HepG2 (cell line): ENCODE measurements at regions of chr12 and their contacts with region 1.

Region 1: GRCh38 chr12:123232807-123233543 is at the starts of genes MPHOSPH9 and MTRFR:
- DNase-seq: peak; percentile 100
- ATAC-seq: peak; percentile 95
- H3K4me3 ChIP-seq: peak within 1 kb of the TSS; percentile 81 to 96 (median 95)
- H3K27ac ChIP-seq: peak within 1 kb of the TSS; percentile 89
- H3K4me1 ChIP-seq: peaks cover 55% of the 10 kb centered on the region
- H3K27me3 ChIP-seq: no peaks in the 10 kb centered on the region; a peak in 1 of 5 replicates
- CTCF ChIP-seq: no peak
- EP300 ChIP-seq: peak in 1 of 2 experiments; percentile 21; a peak in 2 of 4 replicates
- POLR2A ChIP-seq: peak; percentile 99
- RAD21 ChIP-seq: peak; percentile 72
- total RNA-seq, gene MPHOSPH9: 63.4 and 105 TPM in 2 replicates
- total RNA-seq, gene MTRFR: 9.9 and 10.0 TPM in 2 replicates

Region 2: DNA sequence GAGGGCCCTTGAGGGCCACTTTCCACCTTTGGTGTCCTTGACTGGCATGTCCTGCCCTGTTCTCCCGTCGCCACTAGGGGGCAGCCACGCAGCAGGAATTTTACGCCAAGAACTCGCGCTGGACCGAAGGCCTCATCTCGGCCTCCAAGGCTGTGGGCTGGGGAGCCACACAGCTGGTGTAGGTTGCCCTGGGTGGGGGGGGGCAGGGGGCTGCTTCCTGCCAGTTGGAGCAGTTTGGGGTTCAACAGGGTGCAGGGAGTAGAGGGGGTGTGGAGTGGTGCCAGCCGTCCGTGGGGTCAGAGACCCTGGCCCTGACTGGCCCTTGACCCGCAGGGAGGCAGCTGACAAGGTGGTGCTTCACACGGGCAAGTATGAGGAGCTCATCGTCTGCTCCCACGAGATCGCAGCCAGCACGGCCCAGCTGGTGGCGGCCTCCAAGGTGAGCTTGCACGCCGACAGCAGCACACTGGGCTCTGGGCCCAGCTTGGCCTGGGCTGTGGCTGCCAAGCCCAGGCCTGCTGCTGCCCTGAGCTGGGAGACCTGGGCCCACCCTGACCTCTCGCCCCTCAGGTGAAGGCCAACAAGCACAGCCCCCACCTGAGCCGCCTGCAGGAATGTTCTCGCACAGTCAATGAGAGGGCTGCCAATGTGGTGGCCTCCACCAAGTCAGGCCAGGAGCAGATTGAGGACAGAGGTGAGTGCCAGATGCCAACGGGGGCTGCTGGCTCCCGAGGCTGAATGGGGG is 372.5 kb before region 1 on chr12:
- CTCF ChIA-PET with region 1: no interaction called
- POLR2A ChIA-PET with region 1: interaction called, 5 read pairs
- in situ Hi-C with region 1: loop called (anchors 25 kb)
- intact Hi-C with region 1: no loop called
- DNase-seq: peak; percentile 48
- ATAC-seq: peak; percentile 56
- H3K4me3 ChIP-seq: no peak overlapping the region
- H3K27ac ChIP-seq: peak overlapping the region; percentile 25
- H3K4me1 ChIP-seq: peaks cover 61% of the 10 kb centered on the region
- H3K27me3 ChIP-seq: no peaks in the 10 kb centered on the region
- CTCF ChIP-seq: peak; percentile 94
- EP300 ChIP-seq: no peak
- POLR2A ChIP-seq: no peak
- RAD21 ChIP-seq: peak; percentile 93

Region 3: DNA sequence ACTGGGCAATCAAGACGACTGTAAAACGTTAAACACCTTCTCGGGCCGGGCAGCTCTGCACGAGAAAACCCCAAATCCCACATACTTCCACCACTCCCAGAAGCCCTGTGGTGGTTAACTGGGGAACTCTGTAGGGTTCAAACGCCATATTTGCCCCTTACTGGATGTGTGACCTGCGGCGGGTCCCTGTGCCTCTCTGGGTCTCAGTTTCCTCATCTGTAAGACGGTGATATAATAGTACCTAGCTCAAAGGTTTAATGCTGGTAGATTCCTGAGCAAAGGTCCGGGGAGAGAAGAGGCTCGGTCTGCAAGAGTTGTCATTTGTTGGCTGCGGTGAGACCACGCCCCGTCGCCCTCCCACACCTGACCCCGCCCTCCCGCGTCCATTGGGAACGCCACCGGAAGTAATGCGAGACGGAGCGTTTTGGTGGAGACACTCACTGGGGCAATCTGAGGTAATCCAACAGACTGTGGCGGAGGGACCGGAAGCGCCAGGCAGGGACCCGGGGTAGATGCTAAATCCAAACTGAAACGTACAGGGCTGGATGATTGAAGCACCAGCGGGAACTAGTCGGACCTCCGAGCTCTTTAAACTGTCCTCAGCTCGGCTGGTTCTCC is 258.6 kb before region 1 on chr12:
- CTCF ChIA-PET with region 1: no interaction called
- POLR2A ChIA-PET with region 1: interaction called, 27 read pairs
- in situ Hi-C with region 1: no loop called
- intact Hi-C with region 1: loop called (anchors 5 kb)
- DNase-seq: peak; percentile 96
- ATAC-seq: peak; percentile 86
- H3K4me3 ChIP-seq: peak overlapping the region; percentile 83 to 95 (median 90)
- H3K27ac ChIP-seq: peak overlapping the region; percentile 92
- H3K4me1 ChIP-seq: peaks cover 38% of the 10 kb centered on the region
- H3K27me3 ChIP-seq: no peaks in the 10 kb centered on the region; a peak in 1 of 5 replicates
- CTCF ChIP-seq: no peak
- EP300 ChIP-seq: no peak; a peak in 1 of 4 replicates
- POLR2A ChIP-seq: peak in 1 of 2 experiments; percentile 43; a peak in 1 of 4 replicates
- RAD21 ChIP-seq: no peak

Region 4: GRCh38 chr12:123075646-123076171 is 157.3 kb before region 1 on chr12:
- CTCF ChIA-PET with region 1: no interaction called
- POLR2A ChIA-PET with region 1: interaction called, 11 read pairs
- in situ Hi-C with region 1: no loop called
- intact Hi-C with region 1: no loop called
- DNase-seq: peak; percentile 78
- ATAC-seq: peak; percentile 89
- H3K4me3 ChIP-seq: peak overlapping the region in 2 of 3 experiments; percentile 27 to 56; a peak in 3 of 6 replicates
- H3K27ac ChIP-seq: peak overlapping the region; percentile 43
- H3K4me1 ChIP-seq: peaks cover 63% of the 10 kb centered on the region
- H3K27me3 ChIP-seq: no peaks in the 10 kb centered on the region
- CTCF ChIP-seq: peak; percentile 73
- EP300 ChIP-seq: no peak
- POLR2A ChIP-seq: no peak
- RAD21 ChIP-seq: no peak

Region 5: DNA sequence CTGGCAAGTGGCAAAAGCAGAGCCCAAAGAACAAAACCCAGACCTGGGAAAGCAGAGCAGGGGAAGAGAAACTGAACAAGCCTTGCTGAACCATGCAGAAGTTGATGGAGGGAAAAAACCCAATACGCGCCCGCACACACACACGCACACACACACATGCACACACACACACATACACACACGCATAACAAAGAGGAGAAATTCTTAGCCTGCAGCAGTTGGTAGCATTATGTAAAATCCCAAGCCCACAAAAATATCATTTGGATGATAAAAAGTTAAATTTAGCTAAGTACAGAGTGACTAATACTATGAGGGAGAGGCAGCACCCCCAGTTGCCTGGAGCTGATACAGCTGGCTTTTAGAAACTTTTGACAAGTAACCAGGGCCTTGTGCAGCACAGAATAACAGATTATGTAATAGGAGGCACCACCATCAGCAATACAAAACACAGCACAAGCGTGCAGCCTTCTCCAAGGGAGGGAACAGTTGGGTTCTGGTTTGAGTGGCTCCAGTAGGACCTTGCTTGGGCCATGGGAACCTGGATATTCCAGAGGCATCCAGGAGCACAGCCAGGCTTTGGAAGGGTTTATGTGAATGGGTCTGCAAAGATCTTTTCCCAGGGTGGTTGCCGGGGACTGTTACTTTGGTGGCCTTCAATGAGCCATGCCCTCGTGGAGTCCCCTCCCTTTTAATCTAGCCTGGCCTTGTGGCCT is 117.4 kb before region 1 on chr12:
- CTCF ChIA-PET with region 1: no interaction called
- POLR2A ChIA-PET with region 1: no interaction called
- in situ Hi-C with region 1: no loop called
- intact Hi-C with region 1: no loop called
- DNase-seq: no peak
- ATAC-seq: no peak
- H3K4me3 ChIP-seq: no peak overlapping the region
- H3K27ac ChIP-seq: no peak overlapping the region
- H3K4me1 ChIP-seq: peaks cover 20% of the 10 kb centered on the region
- H3K27me3 ChIP-seq: no peaks in the 10 kb centered on the region
- CTCF ChIP-seq: no peak
- EP300 ChIP-seq: no peak
- POLR2A ChIP-seq: no peak
- RAD21 ChIP-seq: no peak

Region 6: DNA sequence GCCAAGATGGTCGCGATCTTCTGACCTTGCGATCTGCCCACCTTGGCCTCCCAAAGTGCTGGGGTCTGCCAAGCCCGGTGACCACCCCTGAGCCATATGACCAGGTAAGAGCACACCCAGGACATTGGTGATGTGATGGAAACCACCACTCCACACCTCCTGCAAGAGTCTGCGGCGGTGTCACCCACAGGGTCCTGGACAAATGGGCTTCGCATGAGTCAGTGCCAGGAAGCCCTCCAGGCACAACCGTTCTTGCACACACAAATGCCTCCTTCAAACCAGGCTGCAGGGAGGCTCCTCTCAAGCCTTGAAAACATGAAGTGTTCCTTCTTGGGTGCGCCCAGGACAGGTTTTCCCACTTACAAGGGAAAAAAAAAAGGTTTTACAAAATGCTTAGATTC is 98.7 kb before region 1 on chr12:
- CTCF ChIA-PET with region 1: no interaction called
- POLR2A ChIA-PET with region 1: no interaction called
- in situ Hi-C with region 1: no loop called
- intact Hi-C with region 1: no loop called
- DNase-seq: no peak
- ATAC-seq: no peak
- H3K4me3 ChIP-seq: no peak overlapping the region
- H3K27ac ChIP-seq: no peak overlapping the region
- H3K4me1 ChIP-seq: peaks cover 28% of the 10 kb centered on the region
- H3K27me3 ChIP-seq: no peaks in the 10 kb centered on the region
- CTCF ChIP-seq: no peak
- EP300 ChIP-seq: no peak
- POLR2A ChIP-seq: no peak
- RAD21 ChIP-seq: no peak

Region 7: DNA sequence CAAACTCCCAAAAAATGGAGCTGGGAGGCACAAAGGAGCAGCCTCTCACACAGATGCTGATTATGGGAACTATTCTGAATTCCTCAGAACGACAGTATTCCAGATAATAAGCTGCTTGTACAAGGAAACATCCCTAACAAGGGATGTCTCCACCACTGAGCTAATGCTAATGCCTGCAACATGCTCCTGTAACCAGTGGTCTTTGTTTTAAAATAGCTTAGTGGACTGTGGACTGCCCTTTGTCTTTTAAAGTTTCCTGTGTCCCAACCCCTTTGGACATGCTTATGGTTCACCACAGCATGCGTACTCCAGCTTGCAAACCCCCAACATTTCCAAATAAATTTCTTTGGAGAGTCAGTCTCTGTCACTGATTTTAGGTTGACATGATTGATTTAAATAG is 65.6 kb before region 1 on chr12:
- CTCF ChIA-PET with region 1: no interaction called
- POLR2A ChIA-PET with region 1: interaction called, 10 read pairs
- in situ Hi-C with region 1: no loop called
- intact Hi-C with region 1: no loop called
- DNase-seq: peak; percentile 55
- ATAC-seq: peak; percentile 86
- H3K4me3 ChIP-seq: no peak overlapping the region
- H3K27ac ChIP-seq: peak overlapping the region; percentile 60
- H3K4me1 ChIP-seq: peaks cover 42% of the 10 kb centered on the region
- H3K27me3 ChIP-seq: no peaks in the 10 kb centered on the region
- CTCF ChIP-seq: no peak
- EP300 ChIP-seq: no peak
- POLR2A ChIP-seq: no peak
- RAD21 ChIP-seq: no peak

Region 8: DNA sequence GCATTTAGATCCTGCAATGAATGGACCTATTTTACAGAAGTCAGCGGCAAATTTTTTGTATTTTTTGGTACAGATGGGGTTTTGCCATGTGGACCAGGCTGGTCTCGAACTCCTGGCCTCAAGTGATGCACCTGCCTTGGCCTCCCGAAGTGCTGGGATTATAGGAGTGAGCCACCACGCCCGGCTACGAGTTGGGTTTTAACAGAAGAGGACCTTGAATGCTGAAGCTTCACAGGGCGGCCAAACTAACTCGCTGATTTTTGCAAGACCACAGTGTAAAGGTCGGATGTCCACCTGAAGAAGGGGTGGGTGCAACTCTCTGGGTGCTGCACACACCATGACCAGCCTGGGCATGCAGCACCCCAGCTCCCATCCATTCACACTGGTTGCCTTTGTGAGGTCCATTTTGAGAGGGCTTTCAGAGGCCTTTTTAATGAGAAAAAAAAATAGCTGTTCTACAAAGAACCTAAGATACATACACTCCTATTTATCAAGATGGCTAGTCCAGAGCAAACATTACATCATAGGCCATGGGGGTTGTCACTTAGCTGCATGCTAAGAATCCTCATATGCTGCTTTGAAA is 60.3 kb after region 1 on chr12:
- CTCF ChIA-PET with region 1: no interaction called
- POLR2A ChIA-PET with region 1: interaction called, 14 read pairs
- in situ Hi-C with region 1: no loop called
- intact Hi-C with region 1: no loop called
- DNase-seq: peak; percentile 83
- ATAC-seq: peak; percentile 93
- H3K4me3 ChIP-seq: no peak overlapping the region
- H3K27ac ChIP-seq: peak overlapping the region; percentile 76
- H3K4me1 ChIP-seq: peaks cover 31% of the 10 kb centered on the region
- H3K27me3 ChIP-seq: no peaks in the 10 kb centered on the region
- CTCF ChIP-seq: peak; percentile 10; the same call in 1 of the 2 replicates
- EP300 ChIP-seq: peak in 1 of 2 experiments; percentile 48; a peak in 2 of 4 replicates
- POLR2A ChIP-seq: no peak
- RAD21 ChIP-seq: no peak